Breast epithelium (tissue), 4 donors: ENCODE measurements at regions of chr3 and their contacts with region 1.

Region 1: GRCh38 chr3:153284282-153284938 is 122.4 kb downstream of the RAP2B start:
- DNase-seq: peak in 1 of 2 donors; percentile 58
- H3K4me3 ChIP-seq: no peak overlapping the region
- H3K27ac ChIP-seq: peak overlapping the region; percentile 39 to 73
- H3K4me1 ChIP-seq: peaks cover 0 to 4% of the 10 kb centered on the region in 2 donors
- H3K27me3 ChIP-seq: no peaks in the 10 kb centered on the region
- CTCF ChIP-seq: no peak
- POLR2A ChIP-seq: no peak

Region 2: GRCh38 chr3:153319705-153320554 is 35.5 kb after region 1 on chr3:
- intact Hi-C with region 1: loop called (anchors 2 kb)
- DNase-seq: no peak
- H3K4me3 ChIP-seq: no peak overlapping the region
- H3K27ac ChIP-seq: no peak overlapping the region
- H3K4me1 ChIP-seq: no peaks in the 10 kb centered on the region
- H3K27me3 ChIP-seq: no peaks in the 10 kb centered on the region
- CTCF ChIP-seq: no peak
- POLR2A ChIP-seq: no peak